ENCODE measurements at regions of chr7 and their contacts with region 1.

Region 1: GRCh38 chr7:38222481-38223096 is 44.5 kb downstream of the STARD3NL start:
- DNase-seq: peak in 1 of 3 donors; percentile 79
- ATAC-seq: peak; percentile 90
- H3K4me3 ChIP-seq: no peak overlapping the region
- H3K4me1 ChIP-seq: no peaks in the 10 kb centered on the region
- CTCF ChIP-seq: peak; percentile 61

Region 2: DNA sequence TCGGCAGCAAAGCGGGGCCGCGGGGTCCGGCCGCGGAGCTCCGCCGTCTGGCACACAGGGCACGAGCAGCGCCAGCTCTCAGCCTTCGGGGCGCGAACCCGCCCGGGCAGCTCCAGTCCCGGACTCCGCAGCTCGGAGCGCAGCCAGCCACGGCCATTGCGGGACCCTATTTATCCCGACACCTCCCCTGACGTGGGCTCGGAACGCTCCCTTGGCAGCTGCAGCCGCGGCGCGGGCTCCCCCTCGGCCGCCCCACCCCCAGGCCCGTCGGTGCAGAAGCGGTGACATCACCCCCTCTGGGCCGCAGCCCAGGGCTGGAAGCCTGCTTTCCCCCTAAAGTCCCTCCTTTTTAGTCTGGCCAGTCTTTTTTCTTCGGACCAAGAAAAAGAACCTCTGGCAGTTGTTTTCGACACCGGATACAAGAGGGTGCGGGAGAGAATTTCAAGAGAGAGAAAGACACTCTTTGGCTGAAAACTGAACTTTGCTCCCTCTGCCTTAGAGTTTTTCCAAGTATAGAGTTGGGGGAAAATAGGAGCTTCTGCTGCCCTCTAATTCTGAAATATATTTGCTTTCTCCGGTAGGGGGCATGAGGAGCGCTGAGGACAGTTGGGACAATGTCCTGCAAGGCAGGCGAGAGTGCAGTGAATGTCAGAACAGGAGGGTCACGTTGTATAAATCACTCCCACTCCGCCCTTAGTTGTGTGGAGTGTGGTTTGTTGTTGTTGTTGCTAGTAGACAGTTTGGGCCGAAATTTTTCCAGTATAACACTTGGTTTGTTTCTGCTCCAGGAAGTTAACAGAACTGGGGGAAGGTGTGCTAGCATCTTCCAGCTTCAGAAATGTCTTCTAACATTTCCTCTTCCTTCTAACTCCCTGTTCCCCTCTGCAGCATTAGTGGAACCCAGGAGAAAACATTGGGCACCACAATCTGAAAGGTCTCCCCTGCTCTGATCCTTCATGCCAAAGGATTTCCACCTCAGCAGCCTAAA is 305.6 kb before region 1 on chr7 and contains the start of gene SFRP4:
- intact Hi-C with region 1: loop called in 1 of 2 experiments (anchors 10 kb)
- DNase-seq: peak; percentile 46 to 62 (median 47)
- ATAC-seq: peak; percentile 52
- H3K4me3 ChIP-seq: no peak within 1 kb of the TSS
- H3K4me1 ChIP-seq: peaks cover 14% of the 10 kb centered on the region
- CTCF ChIP-seq: peak; percentile 35
- total RNA-seq, gene SFRP4: 0.19 to 1.5 (median 0.29) TPM

Region 3: DNA sequence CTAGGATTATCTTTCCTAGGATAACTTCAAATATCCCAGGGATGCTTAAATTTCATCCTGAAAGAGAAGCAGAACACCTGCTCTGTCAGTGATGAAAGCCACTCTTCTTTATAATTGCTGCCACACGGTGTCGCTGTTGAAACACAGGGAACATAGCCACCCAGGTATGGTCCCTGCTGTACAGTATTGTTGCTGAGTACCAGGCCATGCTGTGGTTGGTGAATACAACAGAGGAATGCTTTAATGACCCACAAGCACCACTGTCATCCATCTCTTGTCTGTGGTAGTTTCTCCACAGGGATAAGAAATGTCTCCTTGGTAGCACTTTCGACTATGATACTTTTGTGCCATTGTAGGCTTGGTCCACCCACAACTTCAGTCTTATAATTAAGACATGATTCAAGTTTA is 115.1 kb before region 1 on chr7:
- intact Hi-C with region 1: loop called (anchors 2 to 5 kb)
- DNase-seq: peak in 2 of 3 donors; percentile 39 to 93
- ATAC-seq: peak; percentile 90
- H3K4me3 ChIP-seq: no peak overlapping the region
- H3K4me1 ChIP-seq: no peaks in the 10 kb centered on the region
- CTCF ChIP-seq: peak; percentile 48

Region 4: DNA sequence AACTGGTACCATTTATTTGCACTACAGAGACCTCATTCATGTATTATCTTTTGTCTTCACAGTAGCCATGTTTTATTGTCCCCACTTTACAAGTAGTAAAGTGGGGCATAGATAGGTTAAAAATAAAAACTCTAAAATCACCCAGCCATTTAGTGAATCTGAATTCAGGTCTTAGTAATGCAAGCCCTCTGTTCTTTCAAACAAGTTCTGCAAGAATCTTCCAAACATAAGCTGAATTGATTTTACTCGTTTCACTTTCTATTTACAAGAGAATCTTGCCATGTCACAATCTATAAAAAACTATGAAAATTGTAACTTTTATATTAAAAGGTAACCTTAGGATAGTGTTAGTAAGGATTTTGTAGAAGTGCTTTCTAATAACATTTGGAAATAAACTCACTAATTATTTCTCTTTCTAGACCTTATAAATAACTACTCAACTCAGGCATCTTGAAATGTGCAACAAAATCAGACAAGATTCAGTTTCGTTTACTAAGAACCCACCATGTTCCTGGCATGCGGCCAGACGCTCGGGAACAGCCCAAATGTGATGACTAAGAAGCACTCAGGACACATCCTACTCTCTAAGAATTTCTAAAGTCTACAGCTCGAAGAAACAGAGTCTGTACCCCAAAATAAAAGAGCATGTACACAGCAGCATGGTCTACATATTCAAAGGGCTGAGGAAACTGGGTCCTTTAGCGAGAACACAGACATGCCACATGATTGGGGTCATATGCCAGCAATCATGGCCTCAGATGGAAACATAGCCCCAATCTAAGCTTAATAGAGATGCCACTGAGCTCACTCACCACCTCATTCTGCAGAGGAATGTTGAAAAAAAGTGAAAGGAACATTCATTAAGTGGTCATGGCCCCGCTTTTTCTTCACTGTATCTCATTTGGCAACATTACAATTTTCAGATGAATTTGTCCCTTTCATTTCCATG is 241.0 kb after region 1 on chr7:
- intact Hi-C with region 1: no loop called
- DNase-seq: peak; percentile 66 to 79 (median 69)
- ATAC-seq: peak; percentile 45
- H3K4me3 ChIP-seq: no peak overlapping the region
- H3K4me1 ChIP-seq: no peaks in the 10 kb centered on the region
- CTCF ChIP-seq: no peak

Measured in mucosa of descending colon (tissue), 3 donors.